ENCODE measurements at regions of chr2 and their contacts with region 1.

Region 1: GRCh38 chr2:177332041-177332991 is 60.3 kb upstream of the AGPS start:
- DNase-seq: peak; percentile 38
- ATAC-seq: peak; percentile 90

Region 2: DNA sequence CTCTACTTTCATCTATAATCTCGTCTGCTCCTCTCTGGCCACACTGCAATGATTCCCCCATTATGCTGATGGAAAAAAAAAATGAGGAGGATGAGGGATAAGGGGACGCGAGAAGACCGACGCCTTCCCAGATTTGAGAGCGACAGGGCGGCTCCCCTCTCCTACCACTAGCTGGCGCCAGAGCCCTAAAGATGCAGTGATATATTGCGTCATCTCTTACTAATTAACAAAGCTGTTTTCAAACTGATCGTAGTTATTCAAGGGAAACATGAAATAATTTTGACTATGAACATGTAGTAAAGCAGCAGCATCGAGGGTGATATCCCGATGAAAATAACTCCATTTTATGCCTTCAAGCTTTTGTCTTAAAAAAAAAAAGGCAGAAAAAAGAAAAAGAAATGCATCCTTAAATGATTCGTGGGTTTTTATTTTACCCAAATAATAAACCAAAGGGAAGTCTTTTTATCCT is 167.7 kb before region 1 on chr2:
- intact Hi-C with region 1: loop called (anchors 5 kb)
- DNase-seq: peak; percentile 88
- ATAC-seq: peak; percentile 92

Region 3: DNA sequence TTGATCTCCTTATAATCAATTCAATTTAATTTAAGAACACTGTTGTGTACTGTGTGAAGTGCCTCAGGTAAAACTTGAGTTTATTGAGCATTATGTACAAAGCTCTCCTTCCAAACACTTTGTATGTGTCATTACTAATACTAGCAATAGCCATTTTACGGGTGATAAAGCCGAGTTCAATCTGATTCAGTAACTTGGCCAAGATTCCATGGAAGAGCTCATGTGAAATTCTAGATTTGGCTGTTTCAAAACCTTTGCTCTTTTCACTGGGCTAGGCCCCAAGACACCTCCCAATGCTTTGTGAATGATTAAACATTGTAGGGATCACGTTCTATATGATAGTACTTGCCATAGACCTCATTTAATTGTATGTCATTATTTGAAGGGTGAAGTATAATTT is 58.9 kb before region 1 on chr2:
- intact Hi-C with region 1: loop called (anchors 5 kb)
- DNase-seq: no peak
- ATAC-seq: no peak

Region 4: DNA sequence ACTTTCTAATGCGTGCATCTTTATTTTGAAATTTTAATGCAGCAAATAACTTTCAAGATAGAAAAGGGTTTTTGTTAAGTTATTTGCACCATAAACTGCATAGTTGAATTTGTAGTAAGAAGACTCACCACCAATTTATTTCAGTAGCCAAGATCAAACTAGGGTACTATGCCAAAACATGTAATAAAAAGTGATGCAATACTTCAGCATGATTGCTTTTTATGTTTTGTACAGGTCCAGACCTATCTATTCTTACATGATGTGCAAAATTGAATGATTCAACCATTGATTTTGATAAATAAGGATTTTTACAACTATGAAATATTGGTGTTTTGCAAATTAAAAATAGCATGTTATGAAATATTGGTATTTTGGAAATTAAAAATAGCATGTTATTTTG is 87.0 kb after region 1 on chr2:
- intact Hi-C with region 1: loop called (anchors 2 kb)
- DNase-seq: no peak
- ATAC-seq: no peak

Region 5: GRCh38 chr2:177724398-177725287 is 392.3 kb after region 1 on chr2:
- intact Hi-C with region 1: loop called (anchors 5 kb)
- DNase-seq: peak; percentile 43
- ATAC-seq: peak; percentile 54

Region 6: GRCh38 chr2:177758591-177759371 is 426.5 kb after region 1 on chr2:
- intact Hi-C with region 1: loop called (anchors 5 kb)
- DNase-seq: no peak
- ATAC-seq: no peak